Panc1 (cell line): ENCODE measurements at regions of chr17 and their contacts with region 1.

Region 1: GRCh38 chr17:9050801-9051401 is 29.6 kb downstream of the NTN1 start:
- DNase-seq: no peak
- ATAC-seq: peak; percentile 93
- H3K4me3 ChIP-seq: no peak overlapping the region
- H3K27ac ChIP-seq: peak overlapping the region; percentile 59
- H3K4me1 ChIP-seq: peaks cover 6% of the 10 kb centered on the region; the same call in 1 of the 2 replicates
- H3K27me3 ChIP-seq: no peaks in the 10 kb centered on the region
- CTCF ChIP-seq: no peak

Region 2: GRCh38 chr17:8991514-8992285 is 59.2 kb before region 1 on chr17:
- CTCF ChIA-PET with region 1: no interaction called
- POLR2A ChIA-PET with region 1: no interaction called
- in situ Hi-C with region 1: no loop called
- intact Hi-C with region 1: no loop called
- DNase-seq: no peak
- ATAC-seq: no peak
- H3K4me3 ChIP-seq: no peak overlapping the region
- H3K27ac ChIP-seq: no peak overlapping the region
- H3K4me1 ChIP-seq: no peaks in the 10 kb centered on the region
- H3K27me3 ChIP-seq: no peaks in the 10 kb centered on the region
- CTCF ChIP-seq: peak; percentile 85

Region 3: DNA sequence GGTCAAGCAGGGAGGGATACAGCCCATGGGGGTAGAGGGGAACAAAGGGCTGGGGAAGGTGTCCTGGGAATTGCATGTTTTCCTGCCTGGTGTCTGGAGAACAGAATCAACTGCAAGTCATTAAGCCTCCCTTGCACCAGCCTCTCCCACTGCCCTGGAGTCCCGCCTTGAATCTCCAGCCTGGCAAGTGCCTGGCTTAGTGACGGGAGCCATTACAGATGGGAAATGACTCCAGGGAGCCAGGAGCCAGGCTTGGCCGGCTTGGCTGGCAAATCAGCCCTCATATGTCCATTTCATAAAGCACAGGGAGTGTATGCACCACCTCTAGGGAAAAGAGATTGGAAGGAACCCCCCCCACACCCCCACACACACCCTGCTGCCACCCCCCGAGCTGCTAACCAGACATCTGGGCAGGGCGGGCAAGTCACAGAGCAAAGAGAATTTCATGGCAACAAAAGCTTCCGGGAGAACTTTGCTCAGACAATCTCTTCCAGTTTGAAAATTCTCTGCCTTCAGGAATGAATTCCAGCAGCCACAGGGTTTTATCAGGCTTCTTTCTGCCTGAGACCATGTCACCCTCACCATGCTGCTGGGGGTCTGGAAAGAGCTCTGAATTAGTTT is 98.1 kb after region 1 on chr17:
- CTCF ChIA-PET with region 1: interaction called, 12 read pairs
- POLR2A ChIA-PET with region 1: no interaction called
- in situ Hi-C with region 1: no loop called
- intact Hi-C with region 1: no loop called
- DNase-seq: no peak
- ATAC-seq: no peak
- H3K4me3 ChIP-seq: no peak overlapping the region
- H3K27ac ChIP-seq: no peak overlapping the region
- H3K4me1 ChIP-seq: no peaks in the 10 kb centered on the region
- H3K27me3 ChIP-seq: no peaks in the 10 kb centered on the region; the same call in 1 of the 2 replicates
- CTCF ChIP-seq: no peak